Dorsolateral prefrontal cortex (tissue), 120 donors: ENCODE measurements at regions of chr9 and their contacts with region 1.

Region 1: GRCh38 chr9:36862206-36863145 is 171.6 kb downstream of the PAX5 start:
- DNase-seq: peak in 8 of 10 donors; percentile 39 to 73 (median 54)
- H3K4me3 ChIP-seq: no peak overlapping the region
- H3K27ac ChIP-seq: no peak overlapping the region
- H3K27me3 ChIP-seq: peaks cover 0 to 12% (median 0%) of the 10 kb centered on the region in 45 donors
- CTCF ChIP-seq: peak; percentile 33 to 76 (median 64)

Region 2: GRCh38 chr9:36721846-36722572 is 140.5 kb before region 1 on chr9:
- intact Hi-C with region 1: no loop called
- DNase-seq: no peak
- H3K4me3 ChIP-seq: no peak overlapping the region
- H3K27ac ChIP-seq: no peak overlapping the region
- H3K27me3 ChIP-seq: peaks cover 0 to 10% (median 0%) of the 10 kb centered on the region in 45 donors
- CTCF ChIP-seq: no peak

Region 3: DNA sequence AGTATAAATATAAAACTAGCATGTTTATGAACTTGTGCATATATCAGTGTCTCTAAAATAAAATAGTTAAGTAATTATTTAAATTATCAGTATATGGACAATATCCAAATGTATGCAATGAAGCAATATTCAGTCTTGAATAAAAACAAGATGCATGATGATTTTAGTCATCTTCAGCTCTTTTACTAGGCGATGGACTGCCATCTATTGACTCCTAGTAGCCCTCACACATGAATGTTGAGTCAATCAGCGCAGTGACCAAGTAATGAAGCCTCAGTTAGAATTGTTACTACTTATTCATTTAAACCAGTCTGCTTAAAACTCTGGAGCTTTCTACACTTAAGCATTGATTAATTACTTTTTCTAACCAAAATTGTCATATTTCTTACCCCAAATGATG is 467.1 kb after region 1 on chr9:
- intact Hi-C with region 1: loop called in 1 of 2 experiments (anchors 10 kb)
- DNase-seq: no peak
- H3K4me3 ChIP-seq: no peak overlapping the region
- H3K27ac ChIP-seq: no peak overlapping the region
- H3K27me3 ChIP-seq: no peaks in the 10 kb centered on the region
- CTCF ChIP-seq: peak in 45 of 56 donors; percentile 18 to 64 (median 37)

Region 4: GRCh38 chr9:37410969-37411785 is 548.7 kb after region 1 on chr9:
- intact Hi-C with region 1: no loop called
- DNase-seq: no peak
- H3K4me3 ChIP-seq: no peak overlapping the region
- H3K27ac ChIP-seq: no peak overlapping the region
- H3K27me3 ChIP-seq: no peaks in the 10 kb centered on the region
- CTCF ChIP-seq: peak in 3 of 56 donors; percentile 10 to 22 (median 13)